ENCODE measurements at regions of chr9 and their contacts with region 1.

Region 1: GRCh38 chr9:105244003-105244733 is at the start of gene SLC44A1:
- DNase-seq: peak; percentile 97 to 99
- ATAC-seq: peak; percentile 98 to 100 (median 98)
- H3K4me3 ChIP-seq: peak within 1 kb of the TSS; percentile 62 to 91 (median 84)
- H3K27ac ChIP-seq: peak within 1 kb of the TSS; percentile 73 to 89 (median 80)
- H3K4me1 ChIP-seq: peaks cover 0 to 61% (median 43%) of the 10 kb centered on the region in 9 donors
- H3K27me3 ChIP-seq: no peaks in the 10 kb centered on the region
- CTCF ChIP-seq: peak in 3 of 9 donors; percentile 9 to 29 (median 26)
- total RNA-seq, gene SLC44A1: 12.6 to 29.0 (median 19.0) TPM

Region 2: GRCh38 chr9:104863180-104863883 is 380.8 kb before region 1 on chr9:
- intact Hi-C with region 1: loop called in 1 of 10 experiments (anchors 10 kb)
- DNase-seq: peak in 1 of 2 donors; percentile 50
- ATAC-seq: peak; percentile 63 to 75 (median 73)
- H3K4me3 ChIP-seq: no peak overlapping the region
- H3K27ac ChIP-seq: peak overlapping the region in 4 of 10 donors; percentile 10 to 66 (median 34)
- H3K4me1 ChIP-seq: peaks cover 6 to 82% (median 35%) of the 10 kb centered on the region in 9 donors
- H3K27me3 ChIP-seq: no peaks in the 10 kb centered on the region
- CTCF ChIP-seq: peak; percentile 38 to 89 (median 77)

Region 3: GRCh38 chr9:104882086-104882485 is 362.1 kb before region 1 on chr9:
- intact Hi-C with region 1: no loop called
- DNase-seq: no peak
- ATAC-seq: peak in 2 of 8 donors; percentile 38 to 61
- H3K4me3 ChIP-seq: no peak overlapping the region
- H3K27ac ChIP-seq: peak overlapping the region in 1 of 10 donors; percentile 15
- H3K4me1 ChIP-seq: peaks cover 0 to 27% (median 18%) of the 10 kb centered on the region in 9 donors
- H3K27me3 ChIP-seq: no peaks in the 10 kb centered on the region
- CTCF ChIP-seq: no peak

Region 4: GRCh38 chr9:105205787-105206495 is 38.2 kb before region 1 on chr9:
- intact Hi-C with region 1: loop called in 1 of 10 experiments (anchors 5 kb)
- DNase-seq: peak in 1 of 2 donors; percentile 80
- ATAC-seq: peak; percentile 92 to 98 (median 96)
- H3K4me3 ChIP-seq: no peak overlapping the region
- H3K27ac ChIP-seq: peak overlapping the region in 9 of 10 donors; percentile 49 to 83 (median 64)
- H3K4me1 ChIP-seq: peaks cover 0 to 18% (median 13%) of the 10 kb centered on the region in 9 donors
- H3K27me3 ChIP-seq: no peaks in the 10 kb centered on the region
- CTCF ChIP-seq: no peak

Region 5: DNA sequence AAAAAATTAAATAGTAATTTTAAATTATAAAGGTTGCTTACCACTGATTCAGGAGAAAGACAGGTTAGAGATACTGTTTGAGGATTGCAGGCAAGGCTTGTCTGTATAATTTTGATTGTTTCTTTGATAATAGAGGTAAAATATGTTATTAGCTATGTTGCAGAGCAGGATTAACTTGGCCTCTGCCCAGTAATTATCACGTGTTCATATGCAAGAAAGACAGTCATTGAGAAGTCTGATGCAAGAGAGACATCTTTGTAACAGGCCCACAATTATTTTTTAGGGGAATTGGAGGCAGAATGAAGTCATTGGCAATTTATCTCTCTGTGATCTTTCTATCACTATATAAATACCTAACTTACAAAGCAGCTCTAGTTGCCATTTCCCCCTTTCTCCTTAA is 46.2 kb after region 1 on chr9:
- intact Hi-C with region 1: loop called in 4 of 10 experiments (anchors 5 to 10 kb)
- DNase-seq: no peak
- ATAC-seq: no peak
- H3K4me3 ChIP-seq: no peak overlapping the region
- H3K27ac ChIP-seq: no peak overlapping the region
- H3K4me1 ChIP-seq: peaks cover 0 to 33% (median 10%) of the 10 kb centered on the region in 9 donors
- H3K27me3 ChIP-seq: no peaks in the 10 kb centered on the region
- CTCF ChIP-seq: no peak

Region 6: GRCh38 chr9:105299190-105299854 is 55.2 kb after region 1 on chr9:
- intact Hi-C with region 1: loop called in 4 of 10 experiments (anchors 5 to 10 kb)
- DNase-seq: no peak
- ATAC-seq: peak in 5 of 8 donors; percentile 55 to 92 (median 78)
- H3K4me3 ChIP-seq: no peak overlapping the region
- H3K27ac ChIP-seq: peak overlapping the region in 4 of 10 donors; percentile 11 to 69 (median 42)
- H3K4me1 ChIP-seq: peaks cover 0 to 36% (median 16%) of the 10 kb centered on the region in 9 donors
- H3K27me3 ChIP-seq: no peaks in the 10 kb centered on the region
- CTCF ChIP-seq: no peak

Measured in heart right ventricle (tissue), 16 donors.